Heart right ventricle (tissue), 16 donors: ENCODE measurements at regions of chr16 and their contacts with region 1.

Region 1: DNA sequence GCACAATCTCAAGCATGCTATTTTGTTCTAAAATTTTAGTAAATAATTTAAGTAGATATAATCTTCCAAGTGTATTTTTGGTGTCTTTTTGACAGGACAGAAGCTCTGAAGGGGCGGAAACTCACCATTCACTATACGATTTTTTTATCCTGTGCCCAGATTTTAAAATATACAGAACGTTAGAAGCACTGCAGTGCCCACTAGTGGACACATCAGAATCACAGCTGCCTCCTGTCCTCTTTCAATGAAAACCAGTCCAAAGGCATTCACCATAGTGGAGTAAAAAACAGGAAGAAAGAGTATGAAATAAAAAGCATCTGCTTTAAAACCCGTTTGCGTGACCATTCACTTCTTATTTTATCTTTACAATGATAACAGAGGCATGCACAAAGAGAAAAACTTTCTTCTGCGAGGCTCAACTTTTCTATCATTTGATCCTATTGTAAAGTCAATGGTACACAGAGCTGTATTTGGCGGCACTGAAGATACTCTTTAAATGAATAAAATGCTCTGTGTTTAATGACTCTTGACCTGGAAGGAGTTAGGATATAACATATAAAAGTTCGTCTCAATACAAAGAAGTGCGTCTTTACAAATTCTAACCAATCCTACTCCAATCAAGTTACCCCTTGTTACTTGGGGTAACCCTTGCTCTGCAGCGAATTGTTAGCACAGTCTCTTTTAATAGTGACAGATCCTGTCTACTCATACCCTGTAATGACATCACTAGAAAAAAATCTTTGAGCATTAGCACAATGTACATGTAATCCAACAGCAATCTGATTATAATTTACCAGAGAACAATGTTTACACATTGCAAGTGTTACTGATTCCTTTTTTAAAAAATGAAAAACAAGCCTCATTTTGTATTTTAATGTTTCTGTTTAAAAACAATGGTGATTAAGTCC is 339.8 kb upstream of the PSMD7 start:
- DNase-seq: peak; percentile 21 to 56
- ATAC-seq: peak in 3 of 8 donors; percentile 44 to 61 (median 54)
- H3K4me3 ChIP-seq: no peak overlapping the region
- H3K27ac ChIP-seq: no peak overlapping the region
- H3K4me1 ChIP-seq: peaks cover 0 to 5% (median 0%) of the 10 kb centered on the region in 9 donors
- H3K27me3 ChIP-seq: peaks cover 0 to 12% (median 0%) of the 10 kb centered on the region in 7 donors
- CTCF ChIP-seq: peak; percentile 58 to 88 (median 82)

Region 2: DNA sequence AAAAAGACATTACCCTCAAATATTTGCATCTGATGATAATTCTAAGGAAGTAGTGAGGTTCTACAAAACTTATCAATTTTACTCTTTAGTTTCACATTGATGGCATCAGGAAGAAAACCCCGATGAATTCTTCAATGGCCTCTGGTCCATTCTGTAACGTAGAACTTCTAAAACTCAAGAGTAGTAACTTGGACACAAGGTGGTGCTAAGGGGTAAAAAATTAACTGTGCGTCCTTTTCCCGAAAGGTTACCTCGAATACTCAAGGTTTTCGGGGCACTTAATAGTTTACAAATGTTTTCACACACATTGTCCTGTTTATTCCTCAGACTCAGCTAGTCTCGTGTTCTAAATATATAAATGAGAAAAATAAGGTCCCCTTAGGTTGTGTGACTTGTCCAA is 391.6 kb before region 1 on chr16:
- intact Hi-C with region 1: loop called in 3 of 10 experiments (anchors 5 to 10 kb)
- DNase-seq: no peak
- ATAC-seq: no peak
- H3K4me3 ChIP-seq: no peak overlapping the region
- H3K27ac ChIP-seq: no peak overlapping the region
- H3K4me1 ChIP-seq: no peaks in the 10 kb centered on the region
- H3K27me3 ChIP-seq: peaks cover 0 to 34% (median 14%) of the 10 kb centered on the region in 7 donors
- CTCF ChIP-seq: peak in 7 of 9 donors; percentile 10 to 54 (median 38)

Region 3: GRCh38 chr16:73888840-73889490 is 67.9 kb before region 1 on chr16:
- intact Hi-C with region 1: loop called in 1 of 10 experiments (anchors 10 kb)
- DNase-seq: peak in 1 of 2 donors; percentile 15
- ATAC-seq: peak in 7 of 8 donors; percentile 67 to 95 (median 84)
- H3K4me3 ChIP-seq: peak overlapping the region in 1 of 10 donors; percentile 41
- H3K27ac ChIP-seq: peak overlapping the region in 4 of 10 donors; percentile 18 to 48 (median 21)
- H3K4me1 ChIP-seq: peaks cover 0 to 15% (median 0%) of the 10 kb centered on the region in 9 donors
- H3K27me3 ChIP-seq: peaks cover 0 to 68% (median 53%) of the 10 kb centered on the region in 7 donors
- CTCF ChIP-seq: no peak